Motor neuron (in vitro differentiated cells): ENCODE measurements at regions of chr19 and their contacts with region 1.

Region 1: DNA sequence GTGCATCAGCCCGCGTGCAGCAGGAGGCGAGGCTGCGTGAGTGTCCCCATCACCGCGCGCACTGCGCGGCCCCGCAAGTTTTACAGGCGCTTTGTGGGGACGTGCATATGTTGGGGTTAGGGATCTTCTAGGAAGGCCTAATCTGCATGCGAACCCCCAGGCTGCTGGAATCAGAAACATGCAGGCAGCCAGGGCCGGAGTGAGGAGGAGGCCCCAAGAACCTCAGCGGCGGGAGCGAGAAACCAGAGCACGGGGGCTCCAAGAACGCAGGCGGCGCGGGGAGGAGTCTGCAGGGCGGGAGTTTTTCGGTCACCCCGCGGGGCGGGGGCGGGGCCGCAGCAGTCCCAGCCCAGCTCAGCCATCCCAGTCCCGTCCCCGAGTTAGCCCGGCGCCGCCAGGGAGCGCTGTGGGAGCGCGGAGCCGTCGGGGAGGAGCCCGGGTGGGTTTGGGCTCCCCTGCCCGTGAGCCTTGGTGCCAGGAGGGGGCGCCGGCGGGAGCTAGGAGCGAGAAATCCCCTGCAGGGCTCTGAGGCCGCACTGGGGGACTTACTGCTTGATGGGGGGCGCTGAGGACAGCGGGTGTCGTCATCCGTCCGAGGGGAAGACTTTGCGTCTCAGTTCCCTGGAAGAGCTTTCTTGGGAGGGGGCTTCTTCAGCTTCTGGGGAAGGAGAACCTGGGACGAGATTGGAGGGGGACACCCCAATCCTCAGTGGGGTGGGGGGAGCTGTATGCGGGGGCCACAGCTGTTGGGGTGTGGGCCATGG is 933 bp upstream of the NRTN start:
- ATAC-seq: peak; percentile 72 to 91 (median 75)
- H3K4me3 ChIP-seq: peak overlapping the region in 1 of 5 donors; percentile 37
- H3K27ac ChIP-seq: no peak overlapping the region
- H3K4me1 ChIP-seq: peaks cover 11 to 26% of the 10 kb centered on the region in 2 donors

Region 2: GRCh38 chr19:5880604-5881078 is 76.7 kb after region 1 on chr19:
- in situ Hi-C with region 1: loop called in 1 of 9 experiments (anchors 10 kb)
- ATAC-seq: peak; percentile 55 to 81 (median 70)
- H3K4me3 ChIP-seq: no peak overlapping the region
- H3K27ac ChIP-seq: no peak overlapping the region
- H3K4me1 ChIP-seq: peaks cover 13 to 23% of the 10 kb centered on the region in 2 donors

Region 3: GRCh38 chr19:6021878-6022569 is 218.1 kb after region 1 on chr19:
- in situ Hi-C with region 1: loop called in 1 of 9 experiments (anchors 25 kb)
- ATAC-seq: peak; percentile 82 to 100 (median 95)
- H3K4me3 ChIP-seq: no peak overlapping the region
- H3K27ac ChIP-seq: no peak overlapping the region
- H3K4me1 ChIP-seq: peaks cover 0 to 16% of the 10 kb centered on the region in 2 donors